Activated CD4-positive, alpha-beta T cell treated with anti-CD3 and anti-CD28 coated beads for 36 hours (primary cell): ENCODE measurements at regions of chr6 and their contacts with region 1.

Region 1: GRCh38 chr6:56624046-56624727 is 18.5 kb downstream of the DST start:
- DNase-seq: no peak
- ATAC-seq: no peak
- H3K4me3 Mint-ChIP-seq: no peak overlapping the region
- H3K27ac Mint-ChIP-seq: no peak overlapping the region
- H3K4me1 Mint-ChIP-seq: no peaks in the 10 kb centered on the region
- H3K27me3 Mint-ChIP-seq: peaks cover 2% of the 10 kb centered on the region

Region 2: GRCh38 chr6:56347526-56347925 is 276.7 kb before region 1 on chr6:
- CTCF ChIA-PET with region 1: no interaction called
- POLR2A ChIA-PET with region 1: no interaction called
- intact Hi-C with region 1: no loop called
- DNase-seq: no peak
- ATAC-seq: no peak
- H3K4me3 Mint-ChIP-seq: no peak overlapping the region
- H3K27ac Mint-ChIP-seq: no peak overlapping the region
- H3K4me1 Mint-ChIP-seq: no peaks in the 10 kb centered on the region
- H3K27me3 Mint-ChIP-seq: peaks cover 8% of the 10 kb centered on the region

Region 3: GRCh38 chr6:56637640-56638039 is 13.5 kb after region 1 on chr6:
- CTCF ChIA-PET with region 1: interaction called, 13 read pairs
- POLR2A ChIA-PET with region 1: no interaction called
- intact Hi-C with region 1: no loop called
- DNase-seq: no peak
- ATAC-seq: no peak
- H3K4me3 Mint-ChIP-seq: no peak overlapping the region
- H3K27ac Mint-ChIP-seq: no peak overlapping the region
- H3K4me1 Mint-ChIP-seq: no peaks in the 10 kb centered on the region
- H3K27me3 Mint-ChIP-seq: no peaks in the 10 kb centered on the region

Region 4: GRCh38 chr6:56742122-56742791 is 118.1 kb after region 1 on chr6:
- CTCF ChIA-PET with region 1: no interaction called
- POLR2A ChIA-PET with region 1: no interaction called
- intact Hi-C with region 1: no loop called
- DNase-seq: no peak
- ATAC-seq: no peak
- H3K4me3 Mint-ChIP-seq: no peak overlapping the region
- H3K27ac Mint-ChIP-seq: no peak overlapping the region
- H3K4me1 Mint-ChIP-seq: peaks cover 2% of the 10 kb centered on the region
- H3K27me3 Mint-ChIP-seq: no peaks in the 10 kb centered on the region